ENCODE measurements at regions of chr4 and their contacts with region 1.

Region 1: DNA sequence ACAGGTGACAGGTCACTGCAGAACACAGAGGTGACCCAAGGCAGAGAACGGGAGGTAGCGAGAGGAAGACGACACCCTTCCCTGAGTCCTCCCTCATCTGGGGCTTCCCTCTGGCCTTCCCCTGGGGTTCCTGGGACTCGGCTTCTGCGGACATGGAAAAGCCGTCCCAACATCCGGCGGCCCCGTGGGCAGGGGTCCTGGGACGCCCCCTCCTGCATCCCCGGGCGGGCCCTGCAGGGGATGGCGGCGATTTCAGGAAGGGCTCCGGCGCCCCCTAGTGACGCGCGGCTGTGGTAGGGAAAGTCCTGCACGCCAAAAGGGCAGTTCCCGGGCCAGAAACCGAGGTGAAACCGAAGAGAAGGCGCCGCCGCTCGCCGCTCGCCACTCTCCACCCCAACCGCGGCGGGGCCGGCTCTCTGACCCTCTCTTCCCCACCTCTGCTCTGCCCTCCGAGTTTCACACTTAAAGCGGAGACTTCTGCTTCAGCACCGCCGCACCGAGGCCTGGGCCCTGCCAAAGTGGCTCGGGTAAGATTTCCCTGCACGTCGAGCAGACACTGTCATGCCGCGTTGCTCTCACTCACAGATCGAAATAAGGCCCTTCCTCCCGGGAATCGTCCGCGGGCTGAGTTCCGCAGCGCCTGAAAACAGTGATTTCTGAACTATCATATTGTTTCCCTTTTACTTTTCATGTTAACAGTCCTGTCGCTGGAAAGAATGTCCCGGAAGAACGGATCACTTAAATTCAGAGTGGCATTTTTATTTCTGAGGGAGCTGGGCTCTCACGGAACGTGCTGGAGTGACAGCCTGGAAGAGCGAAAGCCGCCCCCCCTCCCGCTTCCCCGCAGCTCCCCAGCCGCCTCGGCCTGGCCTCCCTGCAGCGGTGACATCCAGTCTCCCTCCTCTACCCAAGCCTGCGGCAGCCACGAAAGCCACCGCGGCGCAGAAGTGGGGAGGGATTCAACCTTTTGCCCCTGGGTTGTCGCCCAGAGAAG is 110.6 kb downstream of the DCTD start:
- DNase-seq: peak; percentile 41 to 46 (median 42)
- H3K4me3 ChIP-seq: peak overlapping the region; percentile 29 to 58 (median 41)
- H3K4me3 Mint-ChIP-seq: peak overlapping the region; percentile 90 to 94
- H3K27ac ChIP-seq: no peak overlapping the region
- H3K27ac Mint-ChIP-seq: peak overlapping the region; percentile 5 to 91 (median 70)
- H3K4me1 ChIP-seq: peaks cover 20 to 35% of the 10 kb centered on the region in 2 donors
- H3K4me1 Mint-ChIP-seq: peaks cover 7% of the 10 kb centered on the region
- H3K27me3 ChIP-seq: peaks cover 0 to 4% of the 10 kb centered on the region in 2 donors
- H3K27me3 Mint-ChIP-seq: peaks cover 18 to 23% (median 22%) of the 10 kb centered on the region in 3 donors
- CTCF ChIP-seq: peak; percentile 84

Region 2: GRCh38 chr4:182443070-182443469 is 363.5 kb before region 1 on chr4:
- intact Hi-C with region 1: no loop called
- DNase-seq: no peak
- H3K4me3 ChIP-seq: no peak overlapping the region
- H3K4me3 Mint-ChIP-seq: no peak overlapping the region
- H3K27ac ChIP-seq: no peak overlapping the region
- H3K27ac Mint-ChIP-seq: peak overlapping the region in 1 of 7 donors; percentile 4
- H3K4me1 ChIP-seq: no peaks in the 10 kb centered on the region
- H3K4me1 Mint-ChIP-seq: no peaks in the 10 kb centered on the region
- H3K27me3 ChIP-seq: peaks cover 23 to 29% of the 10 kb centered on the region in 2 donors
- H3K27me3 Mint-ChIP-seq: peaks cover 20 to 28% (median 23%) of the 10 kb centered on the region in 3 donors
- CTCF ChIP-seq: no peak

Region 3: GRCh38 chr4:182486881-182487280 is 319.7 kb before region 1 on chr4:
- intact Hi-C with region 1: loop called in 1 of 2 experiments (anchors 10 kb)
- DNase-seq: no peak
- H3K4me3 ChIP-seq: no peak overlapping the region
- H3K4me3 Mint-ChIP-seq: no peak overlapping the region
- H3K27ac ChIP-seq: no peak overlapping the region
- H3K27ac Mint-ChIP-seq: no peak overlapping the region
- H3K4me1 ChIP-seq: no peaks in the 10 kb centered on the region
- H3K4me1 Mint-ChIP-seq: peaks cover 1% of the 10 kb centered on the region
- H3K27me3 ChIP-seq: no peaks in the 10 kb centered on the region
- H3K27me3 Mint-ChIP-seq: peaks cover 0 to 1% (median 0%) of the 10 kb centered on the region in 3 donors
- CTCF ChIP-seq: no peak

Region 4: GRCh38 chr4:182955411-182955810 is 148.9 kb after region 1 on chr4:
- intact Hi-C with region 1: no loop called
- DNase-seq: no peak
- H3K4me3 ChIP-seq: no peak overlapping the region
- H3K4me3 Mint-ChIP-seq: no peak overlapping the region
- H3K27ac ChIP-seq: no peak overlapping the region
- H3K27ac Mint-ChIP-seq: no peak overlapping the region
- H3K4me1 ChIP-seq: no peaks in the 10 kb centered on the region
- H3K4me1 Mint-ChIP-seq: no peaks in the 10 kb centered on the region
- H3K27me3 ChIP-seq: no peaks in the 10 kb centered on the region
- H3K27me3 Mint-ChIP-seq: peaks cover 0 to 4% (median 0%) of the 10 kb centered on the region in 3 donors
- CTCF ChIP-seq: no peak